ENCODE measurements at regions of chr5 and their contacts with region 1.

Region 1: GRCh38 chr5:98905857-98906690 is 22.7 kb downstream of the CHD1 start:
- DNase-seq: peak; percentile 60
- H3K4me3 Mint-ChIP-seq: no peak overlapping the region
- H3K27ac Mint-ChIP-seq: peak overlapping the region; percentile 31
- H3K4me1 Mint-ChIP-seq: peaks cover 22% of the 10 kb centered on the region
- H3K27me3 Mint-ChIP-seq: no peaks in the 10 kb centered on the region
- CTCF ChIP-seq: peak; percentile 78

Region 2: GRCh38 chr5:98786191-98786853 is 119.8 kb before region 1 on chr5:
- CTCF ChIA-PET with region 1: no interaction called
- POLR2A ChIA-PET with region 1: no interaction called
- intact Hi-C with region 1: no loop called
- DNase-seq: no peak
- H3K4me3 Mint-ChIP-seq: no peak overlapping the region
- H3K27ac Mint-ChIP-seq: peak overlapping the region; percentile 28
- H3K4me1 Mint-ChIP-seq: peaks cover 40% of the 10 kb centered on the region
- H3K27me3 Mint-ChIP-seq: no peaks in the 10 kb centered on the region
- CTCF ChIP-seq: no peak

Region 3: GRCh38 chr5:98865690-98866089 is 40.4 kb before region 1 on chr5:
- CTCF ChIA-PET with region 1: no interaction called
- POLR2A ChIA-PET with region 1: no interaction called
- intact Hi-C with region 1: no loop called
- DNase-seq: no peak
- H3K4me3 Mint-ChIP-seq: no peak overlapping the region
- H3K27ac Mint-ChIP-seq: no peak overlapping the region
- H3K4me1 Mint-ChIP-seq: no peaks in the 10 kb centered on the region
- H3K27me3 Mint-ChIP-seq: no peaks in the 10 kb centered on the region
- CTCF ChIP-seq: no peak

Region 4: GRCh38 chr5:99025298-99026045 is 119.4 kb after region 1 on chr5:
- CTCF ChIA-PET with region 1: interaction called, 10 read pairs
- POLR2A ChIA-PET with region 1: interaction called, 5 read pairs
- intact Hi-C with region 1: no loop called
- DNase-seq: no peak
- H3K4me3 Mint-ChIP-seq: no peak overlapping the region
- H3K27ac Mint-ChIP-seq: no peak overlapping the region
- H3K4me1 Mint-ChIP-seq: no peaks in the 10 kb centered on the region
- H3K27me3 Mint-ChIP-seq: no peaks in the 10 kb centered on the region
- CTCF ChIP-seq: no peak

Region 5: GRCh38 chr5:99037668-99038067 is 131.6 kb after region 1 on chr5:
- CTCF ChIA-PET with region 1: interaction called, 43 read pairs
- POLR2A ChIA-PET with region 1: interaction called, 24 read pairs
- intact Hi-C with region 1: loop called (anchors 1 kb)
- DNase-seq: no peak
- H3K4me3 Mint-ChIP-seq: no peak overlapping the region
- H3K27ac Mint-ChIP-seq: no peak overlapping the region
- H3K4me1 Mint-ChIP-seq: peaks cover 8% of the 10 kb centered on the region
- H3K27me3 Mint-ChIP-seq: no peaks in the 10 kb centered on the region
- CTCF ChIP-seq: no peak

Measured in MCF 10A (cell line).